Activated CD8-positive, alpha-beta T cell treated with anti-CD3 and anti-CD28 coated beads for 36 hours (primary cell): ENCODE measurements at regions of chr17 and their contacts with region 1.

Region 1: DNA sequence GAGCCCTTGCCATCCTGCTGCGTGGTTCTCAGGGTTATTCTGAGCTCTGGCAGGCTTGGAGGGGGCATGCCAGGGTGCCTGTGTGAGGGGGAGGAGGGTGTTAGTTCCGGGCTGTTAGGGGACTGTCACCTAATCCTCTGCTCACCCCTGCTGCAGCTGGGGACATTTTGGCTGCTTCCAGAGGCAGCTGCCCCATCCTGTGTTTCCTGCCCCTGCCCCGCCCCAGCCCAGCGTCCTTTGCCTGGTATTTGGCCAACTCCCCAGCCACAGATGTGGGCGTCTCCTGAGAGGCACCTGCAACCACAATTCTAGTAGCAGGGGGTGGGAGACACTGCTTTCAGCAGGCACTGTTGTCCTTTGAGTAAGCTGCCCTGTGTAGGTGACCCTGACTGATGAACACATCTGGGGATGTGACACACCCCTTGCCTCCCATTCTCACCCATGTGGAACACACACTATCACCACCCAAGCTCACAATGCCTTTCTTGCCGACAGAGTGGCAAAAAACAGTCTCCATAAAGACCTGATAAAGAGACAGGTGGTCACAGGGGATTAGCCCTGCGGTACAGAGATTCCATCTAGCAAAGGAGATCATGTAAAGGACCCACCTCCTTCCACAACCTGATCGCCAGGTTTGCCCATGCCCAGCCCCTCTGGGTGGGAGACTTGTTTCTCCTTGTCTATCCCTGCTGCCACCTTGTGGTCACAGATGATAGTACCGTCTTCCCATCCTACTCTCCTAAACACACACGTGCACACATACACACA is at the start of gene CHRNE:
- DNase-seq: peak; percentile 91
- ATAC-seq: peak; percentile 52
- H3K4me3 Mint-ChIP-seq: peak within 1 kb of the TSS; percentile 34
- H3K27ac Mint-ChIP-seq: peak within 1 kb of the TSS; percentile 75
- H3K4me1 Mint-ChIP-seq: peaks cover 34% of the 10 kb centered on the region
- H3K27me3 Mint-ChIP-seq: no peaks in the 10 kb centered on the region
- CTCF ChIP-seq: peak; percentile 95
- total RNA-seq, gene CHRNE: 0.45 to 0.78 TPM

Region 2: GRCh38 chr17:4703330-4703691 is 199.9 kb before region 1 on chr17:
- CTCF ChIA-PET with region 1: no interaction called
- POLR2A ChIA-PET with region 1: interaction called, 16 read pairs
- intact Hi-C with region 1: no loop called
- DNase-seq: no peak
- ATAC-seq: no peak
- H3K4me3 Mint-ChIP-seq: peak overlapping the region; percentile 79
- H3K27ac Mint-ChIP-seq: peak overlapping the region; percentile 98
- H3K4me1 Mint-ChIP-seq: peaks cover 42% of the 10 kb centered on the region
- H3K27me3 Mint-ChIP-seq: no peaks in the 10 kb centered on the region
- CTCF ChIP-seq: no peak

Region 3: DNA sequence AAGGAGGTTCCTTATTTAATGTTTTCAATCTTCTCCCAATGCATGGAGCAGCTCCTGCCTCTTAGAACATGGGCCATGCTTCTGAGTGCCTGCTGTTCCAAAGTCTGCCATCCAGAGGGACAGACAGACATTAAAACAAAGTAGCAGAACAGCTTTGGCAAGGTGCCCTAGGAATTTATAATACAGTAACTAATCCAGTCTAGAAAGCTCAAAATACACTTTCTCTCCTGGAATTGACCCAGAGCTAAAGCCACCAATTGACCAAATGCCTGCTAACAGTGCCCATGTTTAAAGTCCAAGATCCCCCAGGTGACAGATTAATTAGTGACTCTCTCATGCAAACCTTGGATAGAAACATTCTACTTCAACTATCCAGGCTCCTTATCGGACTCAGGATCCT is 10.8 kb after region 1 on chr17:
- CTCF ChIA-PET with region 1: interaction called, 23 read pairs
- POLR2A ChIA-PET with region 1: interaction called, 7 read pairs
- intact Hi-C with region 1: no loop called
- DNase-seq: no peak
- ATAC-seq: no peak
- H3K4me3 Mint-ChIP-seq: no peak overlapping the region
- H3K27ac Mint-ChIP-seq: no peak overlapping the region
- H3K4me1 Mint-ChIP-seq: no peaks in the 10 kb centered on the region
- H3K27me3 Mint-ChIP-seq: no peaks in the 10 kb centered on the region
- CTCF ChIP-seq: no peak

Region 4: DNA sequence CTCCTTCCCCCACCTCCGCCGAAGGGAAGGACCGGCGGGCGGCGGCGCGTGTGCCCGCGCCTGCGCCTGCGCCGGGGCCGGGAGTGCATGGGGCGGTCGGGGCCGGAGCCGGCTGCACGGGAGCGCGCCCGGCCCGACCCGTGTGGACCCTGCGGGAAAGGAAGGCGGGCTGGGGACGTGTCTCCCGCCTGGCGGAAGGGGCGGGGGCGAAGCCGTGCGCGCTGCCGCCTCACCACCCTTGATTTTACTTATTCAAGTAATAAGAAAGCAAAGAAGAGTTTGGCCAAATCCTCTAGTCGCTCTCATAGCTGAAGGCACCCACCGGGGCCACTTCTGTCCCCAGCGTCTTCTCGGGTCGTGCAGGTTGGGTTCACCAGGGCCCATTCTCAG is 45.7 kb after region 1 on chr17:
- CTCF ChIA-PET with region 1: interaction called, 3 read pairs
- POLR2A ChIA-PET with region 1: interaction called, 20 read pairs
- intact Hi-C with region 1: no loop called
- DNase-seq: peak; percentile 85
- ATAC-seq: peak; percentile 35
- H3K4me3 Mint-ChIP-seq: peak overlapping the region; percentile 97
- H3K27ac Mint-ChIP-seq: peak overlapping the region; percentile 99
- H3K4me1 Mint-ChIP-seq: peaks cover 32% of the 10 kb centered on the region
- H3K27me3 Mint-ChIP-seq: no peaks in the 10 kb centered on the region
- CTCF ChIP-seq: no peak